Mammary epithelial cell (primary cell): ENCODE measurements at regions of chr4 and their contacts with region 1.

Region 1: GRCh38 chr4:102610007-102610406 is 108.8 kb downstream of the NFKB1 start:
- DNase-seq: no peak
- H3K4me3 ChIP-seq: no peak overlapping the region
- H3K27ac ChIP-seq: no peak overlapping the region
- H3K4me1 ChIP-seq: peaks cover 27% of the 10 kb centered on the region
- H3K27me3 ChIP-seq: no peaks in the 10 kb centered on the region
- CTCF ChIP-seq: peak; percentile 13 to 29

Region 2: GRCh38 chr4:102439236-102439614 is 170.8 kb before region 1 on chr4:
- CTCF ChIA-PET with region 1: no interaction called
- dilution Hi-C with region 1: loop called (anchors 5 kb)
- in situ Hi-C with region 1: loop called in 1 of 2 experiments (anchors 10 kb)
- intact Hi-C with region 1: no loop called
- DNase-seq: peak; percentile 92
- H3K4me3 ChIP-seq: no peak overlapping the region
- H3K27ac ChIP-seq: peak overlapping the region; percentile 46
- H3K4me1 ChIP-seq: peaks cover 12% of the 10 kb centered on the region
- H3K27me3 ChIP-seq: no peaks in the 10 kb centered on the region
- CTCF ChIP-seq: no peak

Region 3: DNA sequence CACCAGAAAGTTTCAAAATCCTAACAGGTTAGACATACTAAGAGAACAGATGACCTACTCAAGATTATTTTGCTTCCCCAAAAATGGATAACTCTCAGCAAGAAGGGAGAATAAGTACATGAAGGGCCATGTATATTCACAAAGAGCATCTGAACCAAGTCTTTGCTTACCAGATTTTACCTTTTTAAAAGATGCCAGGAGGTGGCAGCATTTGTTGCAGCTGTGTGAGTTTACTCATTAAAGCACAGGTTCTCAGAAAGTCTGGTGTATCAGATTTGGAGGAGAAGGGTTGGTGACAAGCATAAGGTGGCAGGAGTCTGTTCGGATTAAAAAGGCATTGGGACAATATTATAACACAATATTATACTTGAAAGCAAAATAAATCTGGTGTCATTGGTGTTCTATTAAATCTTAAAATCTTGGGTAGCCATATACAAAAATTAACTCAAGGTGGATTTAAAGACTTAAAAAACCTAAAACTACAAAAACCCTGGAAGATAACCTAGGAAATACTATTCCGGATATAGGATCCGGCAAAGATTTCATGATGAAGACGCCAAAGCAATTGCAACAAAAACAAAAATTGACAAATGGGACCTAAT is 160.2 kb before region 1 on chr4:
- CTCF ChIA-PET with region 1: no interaction called
- dilution Hi-C with region 1: no loop called
- in situ Hi-C with region 1: loop called (anchors 10 to 25 kb)
- intact Hi-C with region 1: no loop called
- DNase-seq: peak; percentile 51
- H3K4me3 ChIP-seq: no peak overlapping the region
- H3K27ac ChIP-seq: no peak overlapping the region
- H3K4me1 ChIP-seq: no peaks in the 10 kb centered on the region
- H3K27me3 ChIP-seq: no peaks in the 10 kb centered on the region
- CTCF ChIP-seq: peak; percentile 48 to 75

Region 4: GRCh38 chr4:102881343-102881742 is 271.3 kb after region 1 on chr4:
- CTCF ChIA-PET with region 1: no interaction called
- dilution Hi-C with region 1: no loop called
- in situ Hi-C with region 1: no loop called
- intact Hi-C with region 1: no loop called
- DNase-seq: no peak
- H3K4me3 ChIP-seq: no peak overlapping the region
- H3K27ac ChIP-seq: no peak overlapping the region
- H3K4me1 ChIP-seq: no peaks in the 10 kb centered on the region
- H3K27me3 ChIP-seq: no peaks in the 10 kb centered on the region
- CTCF ChIP-seq: no peak